Activated CD4-positive, alpha-beta T cell treated with anti-CD3 and anti-CD28 coated beads, Interleukin-2, amount 10 ng/mL, durations not matched to agents 24 days and 14 days (primary cell): ENCODE measurements at regions of chr2 and their contacts with region 1.

Region 1: DNA sequence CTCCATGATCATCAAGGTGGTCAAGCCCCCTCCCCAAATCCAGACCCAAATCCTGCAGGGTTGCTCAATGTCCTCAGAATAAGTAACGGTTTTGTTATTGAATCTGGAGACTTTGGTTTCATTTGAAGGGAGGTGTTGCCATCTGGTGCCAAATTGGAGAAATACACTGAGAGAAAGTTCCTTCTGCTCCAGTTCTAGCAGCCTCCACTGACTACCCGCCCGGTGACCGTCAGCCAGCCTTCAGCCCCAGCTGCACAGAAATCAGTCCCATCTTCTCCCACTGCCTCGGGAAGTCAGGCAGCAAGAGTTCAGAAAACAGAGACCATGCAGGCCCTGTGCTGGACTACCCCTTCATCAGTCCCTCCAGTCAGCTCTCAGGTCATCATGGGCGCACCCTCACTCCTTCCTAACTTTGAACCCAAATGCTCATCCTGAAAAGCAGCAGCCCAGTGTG is 38.7 kb downstream of the PKDCC start:
- DNase-seq: peak; percentile 84
- H3K4me3 Mint-ChIP-seq: no peak overlapping the region
- H3K27ac Mint-ChIP-seq: no peak overlapping the region
- H3K4me1 Mint-ChIP-seq: peaks cover 6% of the 10 kb centered on the region
- H3K27me3 Mint-ChIP-seq: peaks cover 11% of the 10 kb centered on the region

Region 2: GRCh38 chr2:41840702-41841551 is 245.6 kb before region 1 on chr2:
- intact Hi-C with region 1: loop called (anchors 1 kb)
- DNase-seq: peak; percentile 99
- H3K4me3 Mint-ChIP-seq: peak overlapping the region; percentile 94
- H3K27ac Mint-ChIP-seq: peak overlapping the region; percentile 87
- H3K4me1 Mint-ChIP-seq: peaks cover 15% of the 10 kb centered on the region
- H3K27me3 Mint-ChIP-seq: peaks cover 20% of the 10 kb centered on the region

Region 3: DNA sequence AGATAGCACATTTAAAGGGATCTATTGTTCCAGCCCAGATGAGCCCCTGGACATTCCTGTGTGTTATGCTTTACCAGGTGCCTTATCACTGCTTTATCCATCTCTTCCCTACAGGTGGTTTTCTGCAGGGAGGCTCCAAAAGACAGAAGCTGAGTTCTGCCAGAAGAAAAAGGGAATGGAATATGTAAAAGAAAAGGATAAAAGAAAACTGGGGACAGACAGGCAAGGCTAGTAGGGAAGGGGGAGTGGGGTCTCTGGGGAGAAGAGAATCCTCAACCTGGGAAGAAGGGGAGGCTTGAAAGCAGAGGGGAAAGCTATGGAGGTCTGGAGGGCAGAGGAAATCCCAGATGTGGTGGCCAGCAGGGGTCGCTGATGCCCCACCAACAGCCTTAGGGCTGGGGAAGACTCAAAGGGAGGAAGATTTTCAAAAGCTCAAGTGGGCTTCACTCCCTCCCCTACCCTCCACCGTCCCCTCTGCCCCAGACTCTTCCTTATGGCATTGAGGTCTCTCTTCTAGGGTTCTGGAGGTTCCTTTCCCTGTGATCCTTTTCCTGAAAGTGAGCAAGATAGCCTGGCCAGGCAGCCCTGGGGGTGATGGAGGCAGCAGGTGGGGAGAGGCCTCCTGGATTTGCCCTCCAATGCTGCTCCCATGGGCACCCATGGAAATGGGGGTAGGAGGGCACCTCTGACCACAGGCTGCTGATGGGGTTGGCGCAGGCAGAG is 216.8 kb before region 1 on chr2:
- intact Hi-C with region 1: loop called (anchors 1 kb)
- DNase-seq: peak; percentile 90
- H3K4me3 Mint-ChIP-seq: no peak overlapping the region
- H3K27ac Mint-ChIP-seq: no peak overlapping the region
- H3K4me1 Mint-ChIP-seq: peaks cover 7% of the 10 kb centered on the region
- H3K27me3 Mint-ChIP-seq: peaks cover 21% of the 10 kb centered on the region

Region 4: GRCh38 chr2:42060718-42061619 is 25.6 kb before region 1 on chr2:
- intact Hi-C with region 1: no loop called
- DNase-seq: no peak
- H3K4me3 Mint-ChIP-seq: no peak overlapping the region
- H3K27ac Mint-ChIP-seq: no peak overlapping the region
- H3K4me1 Mint-ChIP-seq: no peaks in the 10 kb centered on the region
- H3K27me3 Mint-ChIP-seq: peaks cover 16% of the 10 kb centered on the region